Gastrocnemius medialis (tissue), 4 donors: ENCODE measurements at regions of chr14 and their contacts with region 1.

Region 1: GRCh38 chr14:61456720-61457119 is 135.3 kb downstream of the PRKCH start:
- DNase-seq: peak; percentile 52 to 57
- ATAC-seq: peak in 1 of 2 donors; percentile 71
- H3K4me3 ChIP-seq: no peak overlapping the region
- H3K27ac ChIP-seq: no peak overlapping the region
- H3K4me1 ChIP-seq: peaks cover 0 to 9% of the 10 kb centered on the region in 2 donors
- H3K27me3 ChIP-seq: no peaks in the 10 kb centered on the region
- CTCF ChIP-seq: peak; percentile 47 to 86 (median 68)
- POLR2A ChIP-seq: no peak

Region 2: DNA sequence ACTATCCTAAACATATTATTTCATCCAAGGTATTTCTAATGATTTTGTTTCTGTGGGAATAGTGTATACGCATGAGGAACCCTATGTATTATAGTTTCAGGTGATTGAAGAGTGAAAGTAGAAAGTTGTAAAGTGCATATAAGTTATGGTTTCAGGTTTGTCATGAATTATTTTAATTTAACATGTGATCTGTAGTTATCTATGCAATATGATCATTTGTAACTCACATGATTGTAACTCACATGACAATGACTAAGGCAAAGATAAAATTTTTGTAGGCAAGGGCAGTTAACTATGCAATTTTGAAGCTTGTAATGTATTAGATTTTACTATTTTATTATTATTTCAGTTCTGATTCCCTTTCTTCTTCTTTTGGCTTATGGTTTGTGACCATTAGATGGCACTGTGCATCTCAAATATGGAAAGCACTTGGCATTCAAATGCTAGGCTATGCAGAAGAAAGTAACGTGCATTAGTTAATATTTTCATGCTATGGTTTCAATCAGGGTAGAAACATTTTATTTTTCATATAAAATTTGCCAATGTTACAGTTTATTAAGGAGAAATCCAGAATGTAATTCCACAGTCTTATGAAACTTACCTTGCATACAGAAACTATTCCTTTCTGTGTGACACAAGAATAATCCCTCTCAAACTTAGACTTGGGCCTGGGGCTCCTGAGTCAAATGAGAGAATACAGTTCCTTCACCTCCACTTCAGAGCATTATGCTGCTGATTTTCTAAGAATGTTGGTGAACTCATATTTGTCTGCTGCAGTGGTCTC is 159.8 kb before region 1 on chr14:
- in situ Hi-C with region 1: loop called in 2 of 4 experiments (anchors 10 kb)
- intact Hi-C with region 1: loop called (anchors 2 kb)
- DNase-seq: no peak
- ATAC-seq: peak; percentile 62
- H3K4me3 ChIP-seq: no peak overlapping the region
- H3K27ac ChIP-seq: no peak overlapping the region
- H3K4me1 ChIP-seq: peaks cover 11 to 13% of the 10 kb centered on the region in 2 donors
- H3K27me3 ChIP-seq: no peaks in the 10 kb centered on the region
- CTCF ChIP-seq: peak; percentile 23 to 67 (median 55)
- POLR2A ChIP-seq: no peak

Region 3: GRCh38 chr14:61308198-61308597 is 148.5 kb before region 1 on chr14:
- in situ Hi-C with region 1: loop called in 1 of 4 experiments (anchors 10 kb)
- intact Hi-C with region 1: no loop called
- DNase-seq: no peak
- ATAC-seq: peak; percentile 51 to 58
- H3K4me3 ChIP-seq: no peak overlapping the region
- H3K27ac ChIP-seq: peak overlapping the region in 3 of 4 donors; percentile 4 to 52 (median 47)
- H3K4me1 ChIP-seq: no peaks in the 10 kb centered on the region
- H3K27me3 ChIP-seq: no peaks in the 10 kb centered on the region
- CTCF ChIP-seq: no peak
- POLR2A ChIP-seq: no peak

Region 4: DNA sequence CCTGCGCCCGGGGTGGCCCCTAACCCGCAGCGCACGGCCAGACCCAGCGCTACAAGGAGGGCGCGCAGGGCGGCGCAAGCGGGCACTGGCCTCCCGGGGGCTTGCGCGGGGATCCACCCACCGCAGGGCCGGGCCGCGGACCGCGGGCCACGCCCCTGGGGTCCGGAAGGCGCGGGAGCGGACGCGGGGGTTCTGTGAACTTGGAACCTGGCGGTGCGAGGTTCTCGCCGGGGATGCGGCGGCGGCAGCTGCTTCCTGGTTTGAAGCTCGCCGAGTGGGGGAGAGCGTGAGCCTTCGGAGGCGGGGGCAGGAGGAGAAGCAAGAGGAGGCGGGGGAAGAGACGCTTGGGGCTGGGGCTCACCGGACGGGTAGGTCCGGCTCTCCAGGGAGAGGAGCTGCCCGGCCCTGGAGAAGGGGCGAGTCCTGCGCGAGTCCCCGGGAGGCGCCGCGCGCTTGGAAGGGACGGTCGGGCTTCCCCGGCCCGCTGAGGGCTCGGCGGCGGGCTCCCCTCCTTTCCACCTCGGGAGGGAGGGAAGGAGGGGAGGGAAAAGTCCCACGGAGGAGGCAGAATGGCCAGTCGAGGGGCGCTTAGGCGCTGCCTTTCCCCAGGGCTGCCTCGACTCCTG is 135.2 kb before region 1 on chr14 and contains the start of gene PRKCH:
- in situ Hi-C with region 1: no loop called
- intact Hi-C with region 1: loop called (anchors 5 kb)
- DNase-seq: peak; percentile 37 to 48
- ATAC-seq: peak; percentile 69 to 73
- H3K4me3 ChIP-seq: peak within 1 kb of the TSS; percentile 71 to 89 (median 74)
- H3K27ac ChIP-seq: peak within 1 kb of the TSS; percentile 60 to 78 (median 78)
- H3K4me1 ChIP-seq: peaks cover 0 to 3% of the 10 kb centered on the region in 2 donors
- H3K27me3 ChIP-seq: no peaks in the 10 kb centered on the region
- CTCF ChIP-seq: peak in 1 of 5 experiments; percentile 10
- POLR2A ChIP-seq: peak; percentile 21 to 49
- total RNA-seq, gene PRKCH: 11.3 to 32.4 (median 16.6) TPM

Region 5: DNA sequence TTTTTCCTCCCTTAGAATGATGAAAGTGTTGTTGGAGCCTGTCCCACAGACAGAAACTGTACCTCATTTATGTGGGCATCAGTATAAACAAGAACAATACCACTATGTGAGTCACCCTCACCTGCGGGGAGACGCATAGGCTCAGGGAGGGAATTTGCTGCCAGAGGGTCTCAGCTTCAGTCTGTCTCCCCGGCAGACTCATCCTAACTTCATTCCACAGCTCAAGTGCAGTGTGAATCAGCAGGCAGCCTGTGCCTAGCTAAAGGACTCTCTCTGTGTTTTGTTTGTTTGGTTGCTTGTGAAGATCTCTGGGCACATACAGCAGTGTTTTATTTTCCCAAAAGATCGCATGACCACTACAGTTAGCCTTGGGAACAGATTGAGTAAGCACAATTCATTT is 36.4 kb before region 1 on chr14:
- in situ Hi-C with region 1: no loop called
- intact Hi-C with region 1: no loop called
- DNase-seq: no peak
- ATAC-seq: peak; percentile 72 to 86
- H3K4me3 ChIP-seq: no peak overlapping the region
- H3K27ac ChIP-seq: peak overlapping the region; percentile 47 to 70 (median 57)
- H3K4me1 ChIP-seq: peaks cover 14 to 19% of the 10 kb centered on the region in 2 donors
- H3K27me3 ChIP-seq: no peaks in the 10 kb centered on the region
- CTCF ChIP-seq: no peak
- POLR2A ChIP-seq: no peak

Region 6: DNA sequence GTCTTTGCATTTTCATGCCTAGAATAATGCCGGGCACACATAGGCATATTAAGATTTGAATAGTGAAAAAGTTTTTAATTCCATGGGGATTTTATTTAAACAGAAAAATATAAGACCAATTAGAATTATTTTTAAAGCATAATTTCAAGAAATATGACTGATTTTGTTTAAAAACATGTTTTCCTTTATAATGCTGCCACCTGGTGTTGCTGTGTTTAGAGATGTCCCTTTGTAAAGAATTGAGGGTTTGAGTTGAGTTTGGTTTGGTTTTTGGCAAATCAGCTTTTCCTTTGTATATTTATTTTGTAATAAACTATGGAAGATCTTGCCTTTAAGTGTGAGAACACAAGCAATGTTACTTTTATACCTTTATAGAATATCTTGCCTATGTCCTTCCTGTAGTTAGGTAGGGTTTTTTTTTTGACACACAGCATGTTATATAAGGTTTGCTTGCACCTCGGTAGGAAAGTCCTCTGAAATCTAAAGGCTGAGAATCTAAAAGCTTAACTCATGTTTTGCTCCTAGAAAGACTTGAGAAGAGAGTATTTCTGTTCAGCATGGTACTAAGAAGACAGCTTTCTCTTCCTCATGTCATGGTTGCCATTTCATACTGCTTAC is 274.1 kb after region 1 on chr14:
- in situ Hi-C with region 1: loop called in 3 of 4 experiments (anchors 10 to 25 kb)
- intact Hi-C with region 1: no loop called
- DNase-seq: no peak
- ATAC-seq: no peak
- H3K4me3 ChIP-seq: no peak overlapping the region
- H3K27ac ChIP-seq: no peak overlapping the region
- H3K4me1 ChIP-seq: no peaks in the 10 kb centered on the region
- H3K27me3 ChIP-seq: no peaks in the 10 kb centered on the region
- CTCF ChIP-seq: peak in 4 of 5 experiments; percentile 20 to 49 (median 40)
- POLR2A ChIP-seq: no peak

Region 7: DNA sequence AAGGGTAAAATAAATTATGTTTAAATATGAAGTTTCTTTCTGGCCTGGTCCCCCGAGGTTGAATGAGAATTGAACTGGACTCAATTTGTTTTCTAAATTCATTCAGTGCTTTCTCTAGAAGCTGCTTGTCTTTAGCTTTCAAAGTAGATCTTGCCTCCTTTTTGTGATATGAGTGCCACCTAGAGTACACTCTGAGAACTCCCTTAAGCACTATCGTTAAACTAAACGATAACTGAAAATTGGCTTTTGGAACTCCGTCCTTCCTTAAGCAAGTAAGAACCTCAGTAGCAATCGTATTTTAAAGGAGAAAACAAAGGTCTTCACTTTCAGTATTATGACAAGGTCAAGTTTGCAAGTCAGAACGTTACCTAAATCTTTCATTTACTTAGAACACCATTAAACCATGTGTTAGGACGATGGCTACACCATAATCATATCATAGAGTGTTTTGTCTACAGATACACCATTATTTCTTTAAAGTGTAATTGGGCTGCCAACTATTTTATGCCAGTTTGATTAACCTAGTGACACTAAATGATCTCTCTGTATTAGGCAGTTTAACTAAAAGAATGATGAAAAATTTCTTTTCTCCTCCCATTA is 670.3 kb after region 1 on chr14:
- in situ Hi-C with region 1: loop called in 2 of 4 experiments (anchors 10 to 25 kb)
- intact Hi-C with region 1: loop called (anchors 5 kb)
- DNase-seq: no peak
- ATAC-seq: peak in 1 of 2 donors; percentile 49
- H3K4me3 ChIP-seq: no peak overlapping the region
- H3K27ac ChIP-seq: no peak overlapping the region
- H3K4me1 ChIP-seq: no peaks in the 10 kb centered on the region
- H3K27me3 ChIP-seq: peaks cover 0 to 4% (median 4%) of the 10 kb centered on the region in 3 donors
- CTCF ChIP-seq: peak in 4 of 5 experiments; percentile 12 to 54 (median 37)
- POLR2A ChIP-seq: no peak